ENCODE measurements at regions of chr11 and their contacts with region 1.

Region 1: DNA sequence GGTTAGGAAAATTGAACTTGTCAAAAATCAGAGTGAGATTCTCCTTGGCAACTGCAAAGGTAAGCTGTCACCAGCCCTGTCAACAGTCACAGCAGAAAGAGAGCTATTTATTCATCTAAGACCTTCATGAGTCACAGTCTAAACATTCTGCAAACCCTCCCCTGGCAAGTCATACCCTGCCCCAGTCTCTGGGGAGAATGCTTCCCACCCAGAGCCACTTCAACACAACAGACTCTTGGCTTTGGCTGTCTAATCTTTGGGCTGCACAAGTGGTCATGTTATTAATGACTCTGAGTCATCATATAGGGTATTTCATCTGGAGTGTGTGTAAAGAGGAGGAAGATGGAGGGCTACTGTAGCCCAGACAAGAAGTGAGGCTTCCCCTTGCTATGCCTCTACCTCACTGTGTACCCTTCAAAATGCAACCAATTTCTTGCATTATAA is 153.4 kb downstream of the CCDC34 start:
- DNase-seq: no peak

Region 2: DNA sequence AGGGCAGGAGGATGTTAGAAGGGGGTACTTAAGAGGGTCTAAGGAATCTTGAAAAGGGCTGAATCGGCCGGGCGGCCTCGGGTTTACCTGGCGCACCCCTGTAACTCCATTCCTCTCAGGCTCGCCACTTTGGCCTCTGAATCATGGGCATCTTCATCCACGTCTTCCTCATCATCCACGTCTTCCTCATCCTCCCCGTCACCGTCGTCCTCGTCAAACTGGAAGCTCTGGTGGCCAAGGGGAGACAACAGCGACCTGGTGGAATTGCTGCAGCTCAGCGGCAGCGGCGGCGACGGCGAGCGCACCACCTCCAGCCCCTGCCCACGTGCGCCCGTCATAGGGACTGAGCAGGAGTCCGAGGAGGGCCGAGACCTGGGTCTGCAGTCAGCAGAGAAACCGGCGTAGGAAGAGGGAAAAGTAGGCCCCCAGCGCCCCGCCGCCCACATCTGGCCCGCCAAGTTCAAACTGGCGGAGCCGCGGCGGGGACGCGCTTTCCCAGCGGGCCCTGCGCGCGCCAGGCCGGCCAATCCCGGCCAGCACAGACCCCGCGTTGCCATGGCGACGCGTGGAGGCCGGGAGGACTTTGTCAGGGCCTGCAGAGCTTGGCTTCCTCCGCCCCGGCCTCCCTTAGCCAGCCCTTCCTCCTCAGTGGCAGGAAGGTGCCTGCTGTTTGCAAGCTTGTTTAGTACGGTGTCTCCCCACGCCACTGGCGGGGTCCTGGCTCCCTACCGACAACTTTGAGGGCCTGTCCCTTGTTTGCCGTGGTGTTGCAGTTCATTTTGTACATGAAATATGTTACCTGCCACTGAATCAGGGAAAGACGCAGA is 153.4 kb after region 1 on chr11 and contains the start of gene CCDC34:
- intact Hi-C with region 1: loop called (anchors 10 kb)
- DNase-seq: peak; percentile 91
- total RNA-seq, gene CCDC34: 2.3 TPM

Measured in cardiac septum (tissue), 1 donor.